Heart left ventricle (tissue), 16 donors: ENCODE measurements at regions of chr5 and their contacts with region 1.

Region 1: DNA sequence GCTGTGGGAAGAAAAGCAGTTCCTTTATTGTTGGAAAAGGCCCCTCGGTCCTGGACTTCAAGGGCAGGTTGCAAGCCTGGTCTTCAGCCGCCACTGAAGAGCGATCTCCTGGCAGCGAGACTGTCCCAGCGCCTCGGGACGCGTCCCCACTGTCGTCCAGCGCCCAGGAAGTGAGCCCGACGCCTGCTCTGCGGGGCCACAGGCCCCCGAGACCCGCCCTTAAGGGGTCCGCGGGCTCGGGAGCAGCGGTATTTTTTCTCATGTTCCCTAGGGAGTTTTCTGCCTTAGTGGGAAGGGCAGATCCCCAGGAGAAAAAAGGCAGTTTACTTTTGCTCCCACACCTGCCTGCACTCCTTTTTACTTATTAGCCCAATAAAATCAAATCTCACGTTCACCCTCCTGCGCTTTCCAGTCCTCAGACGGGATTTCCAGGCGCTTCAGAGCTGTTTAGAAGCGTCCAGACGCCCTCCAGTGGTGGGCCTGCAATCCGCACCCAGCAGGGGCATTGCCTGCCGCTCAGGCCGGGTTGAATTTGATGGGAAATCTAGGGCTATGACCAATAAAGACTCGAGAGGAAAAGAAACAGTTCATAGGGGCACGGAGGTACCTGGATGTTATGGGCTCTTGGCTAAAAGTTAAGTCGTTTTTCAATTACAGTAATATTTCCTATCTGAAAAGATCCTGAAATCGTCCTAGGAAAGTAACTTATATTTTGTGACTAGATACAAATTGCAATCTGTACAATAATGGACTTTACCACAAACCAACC is 2.8 kb upstream of the EFNA5 start:
- DNase-seq: peak; percentile 79 to 89 (median 85)
- ATAC-seq: peak; percentile 49 to 62 (median 56)
- H3K4me3 ChIP-seq: peak overlapping the region; percentile 48 to 79 (median 64)
- H3K27ac ChIP-seq: peak overlapping the region; percentile 24 to 93 (median 87)
- H3K4me1 ChIP-seq: peaks cover 0 to 41% (median 10%) of the 10 kb centered on the region in 12 donors
- H3K27me3 ChIP-seq: peaks cover 0 to 77% (median 19%) of the 10 kb centered on the region in 9 donors
- CTCF ChIP-seq: peak; percentile 77 to 98 (median 92)
- POLR2A ChIP-seq: no peak

Region 2: GRCh38 chr5:106910486-106910885 is 763.1 kb before region 1 on chr5:
- intact Hi-C with region 1: loop called in 1 of 10 experiments (anchors 10 kb)
- DNase-seq: no peak
- ATAC-seq: no peak
- H3K4me3 ChIP-seq: no peak overlapping the region
- H3K27ac ChIP-seq: no peak overlapping the region
- H3K4me1 ChIP-seq: no peaks in the 10 kb centered on the region
- H3K27me3 ChIP-seq: no peaks in the 10 kb centered on the region
- CTCF ChIP-seq: no peak
- POLR2A ChIP-seq: no peak

Region 3: DNA sequence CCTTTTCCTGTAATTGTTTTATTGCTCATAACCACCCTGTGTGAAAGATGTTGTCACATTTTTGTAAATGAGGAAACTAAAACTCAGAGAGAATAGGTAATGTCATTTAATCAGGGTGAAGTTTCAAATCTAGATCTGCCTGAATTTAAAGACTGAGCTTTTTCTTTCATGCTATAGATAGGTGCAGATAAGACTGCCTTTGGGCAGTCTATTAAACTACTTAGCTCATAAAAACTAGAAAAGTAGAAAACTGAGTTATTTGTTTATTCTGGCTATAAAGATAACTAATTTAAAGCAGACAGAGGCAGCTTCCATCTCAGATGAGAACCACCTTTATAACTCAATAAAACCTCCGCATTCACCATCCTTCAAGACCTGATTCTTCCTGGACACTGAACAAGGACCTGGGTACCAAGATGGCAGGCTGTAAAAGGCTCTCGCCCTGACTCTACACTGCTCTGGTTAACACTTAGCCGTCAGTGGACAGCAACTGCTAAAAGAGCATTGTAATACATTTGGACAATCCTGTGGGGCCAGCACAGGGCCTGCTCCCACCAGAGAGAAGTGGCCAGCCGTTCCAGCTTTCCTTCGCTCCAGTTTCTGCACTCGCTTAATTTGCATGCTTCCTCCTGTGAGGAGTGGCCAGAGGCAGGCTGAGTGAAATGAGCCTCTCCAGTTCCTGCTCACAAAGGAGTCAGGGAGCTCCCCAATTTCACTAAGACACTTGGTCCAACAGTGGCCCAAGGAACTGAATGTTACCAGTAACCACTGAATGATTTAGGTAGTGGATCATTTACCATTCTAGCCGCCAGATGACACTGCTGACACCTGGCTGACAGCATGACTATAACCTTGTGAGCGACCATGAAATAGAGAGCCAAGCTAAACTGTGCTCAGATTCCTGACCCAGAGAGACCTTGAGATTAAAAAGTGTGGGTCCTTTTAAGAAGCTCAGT is 569.2 kb before region 1 on chr5:
- intact Hi-C with region 1: loop called in 5 of 10 experiments (anchors 1 to 10 kb)
- DNase-seq: peak in 3 of 5 donors; percentile 17 to 43 (median 40)
- ATAC-seq: peak; percentile 88 to 97 (median 91)
- H3K4me3 ChIP-seq: no peak overlapping the region
- H3K27ac ChIP-seq: peak overlapping the region in 8 of 12 donors; percentile 3 to 53 (median 36)
- H3K4me1 ChIP-seq: peaks cover 0 to 3% (median 0%) of the 10 kb centered on the region in 12 donors
- H3K27me3 ChIP-seq: no peaks in the 10 kb centered on the region
- CTCF ChIP-seq: peak in 8 of 12 donors; percentile 14 to 54 (median 39)
- POLR2A ChIP-seq: no peak

Region 4: DNA sequence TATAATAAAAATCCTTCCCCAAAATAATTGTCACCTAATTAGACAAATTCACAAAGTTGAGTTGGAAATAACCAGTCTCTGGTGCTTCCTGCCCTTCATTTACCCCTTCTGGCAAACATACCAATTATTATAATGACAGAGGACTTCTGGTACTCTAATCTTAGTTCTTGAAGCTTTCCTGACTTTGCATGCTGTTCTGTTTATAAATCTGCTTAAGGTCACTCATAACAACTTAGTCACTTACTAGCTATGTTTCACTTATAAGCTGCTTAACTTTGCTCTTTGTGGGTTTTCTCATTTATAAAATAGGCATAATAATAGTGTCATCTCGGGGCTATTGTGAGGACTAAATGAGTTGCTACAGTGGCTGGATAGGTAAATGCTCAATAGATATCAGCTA is 449.3 kb before region 1 on chr5:
- intact Hi-C with region 1: loop called in 5 of 10 experiments (anchors 2 to 10 kb)
- DNase-seq: no peak
- ATAC-seq: peak; percentile 42 to 83 (median 66)
- H3K4me3 ChIP-seq: no peak overlapping the region
- H3K27ac ChIP-seq: peak overlapping the region in 8 of 12 donors; percentile 6 to 53 (median 22)
- H3K4me1 ChIP-seq: peaks cover 0 to 5% (median 0%) of the 10 kb centered on the region in 12 donors
- H3K27me3 ChIP-seq: no peaks in the 10 kb centered on the region
- CTCF ChIP-seq: no peak
- POLR2A ChIP-seq: no peak

Region 5: GRCh38 chr5:107469485-107470294 is 203.9 kb before region 1 on chr5:
- intact Hi-C with region 1: loop called in 1 of 10 experiments (anchors 10 kb)
- DNase-seq: no peak
- ATAC-seq: peak in 2 of 4 donors; percentile 19 to 27
- H3K4me3 ChIP-seq: no peak overlapping the region
- H3K27ac ChIP-seq: peak overlapping the region in 10 of 12 donors; percentile 26 to 60 (median 42)
- H3K4me1 ChIP-seq: peaks cover 0 to 60% (median 19%) of the 10 kb centered on the region in 12 donors
- H3K27me3 ChIP-seq: no peaks in the 10 kb centered on the region
- CTCF ChIP-seq: no peak
- POLR2A ChIP-seq: no peak

Region 6: DNA sequence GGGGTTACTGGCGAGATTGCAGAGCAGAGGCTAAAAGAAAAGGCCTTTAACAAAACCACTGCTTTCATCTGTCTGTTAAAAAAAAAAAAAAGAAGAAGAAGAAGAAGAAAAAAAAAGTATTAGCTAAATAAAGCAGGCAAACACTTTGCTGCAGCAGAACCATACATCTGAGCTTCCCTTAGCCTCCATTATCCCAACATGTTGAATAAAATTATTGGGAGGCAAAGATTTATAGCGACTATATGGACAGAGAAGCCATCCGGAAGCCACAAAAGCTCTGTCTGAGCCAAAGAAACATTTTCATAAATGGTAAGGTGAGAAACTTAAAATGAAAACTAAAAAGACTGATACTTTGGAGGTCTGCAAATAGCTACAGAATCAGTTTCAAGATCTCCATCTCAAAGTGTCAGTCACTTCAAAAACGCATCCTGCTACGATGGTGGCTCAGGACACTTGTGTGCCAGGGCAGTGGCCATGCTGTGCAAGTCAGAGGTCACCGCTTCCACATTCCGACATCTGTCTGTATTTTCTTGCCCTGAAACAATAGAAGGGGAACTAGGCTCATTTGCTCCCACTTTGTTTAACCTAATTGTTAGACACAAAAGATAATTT is 12.4 kb before region 1 on chr5:
- intact Hi-C with region 1: no loop called
- DNase-seq: no peak
- ATAC-seq: no peak
- H3K4me3 ChIP-seq: no peak overlapping the region
- H3K27ac ChIP-seq: no peak overlapping the region
- H3K4me1 ChIP-seq: peaks cover 0 to 15% (median 0%) of the 10 kb centered on the region in 12 donors
- H3K27me3 ChIP-seq: peaks cover 0 to under 1% (median 0%) of the 10 kb centered on the region in 9 donors
- CTCF ChIP-seq: no peak
- POLR2A ChIP-seq: no peak